Gastrocnemius medialis (tissue), 4 donors: ENCODE measurements at regions of chr9 and their contacts with region 1.

Region 1: DNA sequence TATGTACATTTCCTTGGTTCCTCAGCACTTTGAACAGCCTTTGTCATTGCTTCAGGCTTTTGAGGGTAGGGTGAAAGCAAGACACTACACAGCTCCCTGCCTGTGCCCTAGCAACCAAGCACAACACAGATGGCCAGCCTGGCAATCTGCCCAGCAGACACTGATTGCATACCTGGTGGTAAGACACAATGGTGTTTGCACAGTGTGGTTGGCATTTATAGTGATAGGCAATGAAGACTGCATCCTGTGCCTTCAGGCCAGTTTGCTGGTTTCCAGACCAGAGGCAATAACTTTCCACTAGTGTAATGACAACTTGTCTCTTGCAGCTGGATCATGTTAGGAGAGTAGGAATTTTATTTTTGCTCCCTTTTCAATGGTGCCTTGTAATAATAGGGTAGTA is 144.5 kb upstream of the TNC start:
- DNase-seq: no peak
- ATAC-seq: no peak
- H3K4me3 ChIP-seq: no peak overlapping the region
- H3K27ac ChIP-seq: no peak overlapping the region
- H3K4me1 ChIP-seq: no peaks in the 10 kb centered on the region
- H3K27me3 ChIP-seq: no peaks in the 10 kb centered on the region
- CTCF ChIP-seq: no peak
- POLR2A ChIP-seq: no peak

Region 2: GRCh38 chr9:115240676-115241075 is 21.8 kb before region 1 on chr9:
- in situ Hi-C with region 1: no loop called
- intact Hi-C with region 1: no loop called
- DNase-seq: no peak
- ATAC-seq: no peak
- H3K4me3 ChIP-seq: no peak overlapping the region
- H3K27ac ChIP-seq: no peak overlapping the region
- H3K4me1 ChIP-seq: no peaks in the 10 kb centered on the region
- H3K27me3 ChIP-seq: no peaks in the 10 kb centered on the region
- CTCF ChIP-seq: no peak
- POLR2A ChIP-seq: no peak

Region 3: DNA sequence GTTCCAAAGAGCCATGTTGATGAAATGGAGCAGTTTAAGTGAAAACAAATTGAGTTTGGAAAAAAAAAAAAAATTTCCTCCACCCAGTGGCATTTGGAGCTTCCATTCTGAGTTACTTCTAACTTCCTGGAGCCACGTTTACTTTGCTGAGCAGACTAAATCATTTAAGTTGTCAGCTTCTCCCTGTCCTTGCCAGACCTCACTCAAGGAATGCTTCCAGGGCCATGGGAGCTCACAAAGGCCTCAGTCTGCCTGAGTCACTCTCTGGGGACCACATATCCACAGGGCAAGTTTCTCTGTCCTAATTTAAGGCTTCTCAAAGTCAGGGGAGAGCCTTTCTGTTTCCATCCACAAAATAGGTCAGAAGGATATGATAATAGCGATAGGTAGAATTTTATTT is 65.8 kb after region 1 on chr9:
- in situ Hi-C with region 1: loop called in 1 of 4 experiments (anchors 10 kb)
- intact Hi-C with region 1: no loop called
- DNase-seq: no peak
- ATAC-seq: no peak
- H3K4me3 ChIP-seq: no peak overlapping the region
- H3K27ac ChIP-seq: no peak overlapping the region
- H3K4me1 ChIP-seq: no peaks in the 10 kb centered on the region
- H3K27me3 ChIP-seq: no peaks in the 10 kb centered on the region
- CTCF ChIP-seq: no peak
- POLR2A ChIP-seq: no peak